MCF 10A (cell line): ENCODE measurements at regions of chr1 and their contacts with region 1.

Region 1: GRCh38 chr1:153775458-153776327 is 486 bp downstream of the SLC27A3 start:
- DNase-seq: peak; percentile 81
- H3K4me3 Mint-ChIP-seq: peak overlapping the region; percentile 70
- H3K27ac Mint-ChIP-seq: peak overlapping the region; percentile 68
- H3K4me1 Mint-ChIP-seq: peaks cover 36% of the 10 kb centered on the region
- H3K27me3 Mint-ChIP-seq: no peaks in the 10 kb centered on the region
- CTCF ChIP-seq: no peak

Region 2: GRCh38 chr1:153763365-153764225 is 12.1 kb before region 1 on chr1:
- CTCF ChIA-PET with region 1: interaction called, 4 read pairs
- POLR2A ChIA-PET with region 1: interaction called, 26 read pairs
- intact Hi-C with region 1: no loop called
- DNase-seq: no peak
- H3K4me3 Mint-ChIP-seq: no peak overlapping the region
- H3K27ac Mint-ChIP-seq: no peak overlapping the region
- H3K4me1 Mint-ChIP-seq: no peaks in the 10 kb centered on the region
- H3K27me3 Mint-ChIP-seq: no peaks in the 10 kb centered on the region
- CTCF ChIP-seq: no peak

Region 3: GRCh38 chr1:153805042-153805745 is 29.5 kb after region 1 on chr1:
- CTCF ChIA-PET with region 1: no interaction called
- POLR2A ChIA-PET with region 1: no interaction called
- intact Hi-C with region 1: no loop called
- DNase-seq: peak; percentile 95
- H3K4me3 Mint-ChIP-seq: peak overlapping the region; percentile 60
- H3K27ac Mint-ChIP-seq: peak overlapping the region; percentile 99
- H3K4me1 Mint-ChIP-seq: peaks cover 32% of the 10 kb centered on the region
- H3K27me3 Mint-ChIP-seq: no peaks in the 10 kb centered on the region
- CTCF ChIP-seq: no peak

Region 4: DNA sequence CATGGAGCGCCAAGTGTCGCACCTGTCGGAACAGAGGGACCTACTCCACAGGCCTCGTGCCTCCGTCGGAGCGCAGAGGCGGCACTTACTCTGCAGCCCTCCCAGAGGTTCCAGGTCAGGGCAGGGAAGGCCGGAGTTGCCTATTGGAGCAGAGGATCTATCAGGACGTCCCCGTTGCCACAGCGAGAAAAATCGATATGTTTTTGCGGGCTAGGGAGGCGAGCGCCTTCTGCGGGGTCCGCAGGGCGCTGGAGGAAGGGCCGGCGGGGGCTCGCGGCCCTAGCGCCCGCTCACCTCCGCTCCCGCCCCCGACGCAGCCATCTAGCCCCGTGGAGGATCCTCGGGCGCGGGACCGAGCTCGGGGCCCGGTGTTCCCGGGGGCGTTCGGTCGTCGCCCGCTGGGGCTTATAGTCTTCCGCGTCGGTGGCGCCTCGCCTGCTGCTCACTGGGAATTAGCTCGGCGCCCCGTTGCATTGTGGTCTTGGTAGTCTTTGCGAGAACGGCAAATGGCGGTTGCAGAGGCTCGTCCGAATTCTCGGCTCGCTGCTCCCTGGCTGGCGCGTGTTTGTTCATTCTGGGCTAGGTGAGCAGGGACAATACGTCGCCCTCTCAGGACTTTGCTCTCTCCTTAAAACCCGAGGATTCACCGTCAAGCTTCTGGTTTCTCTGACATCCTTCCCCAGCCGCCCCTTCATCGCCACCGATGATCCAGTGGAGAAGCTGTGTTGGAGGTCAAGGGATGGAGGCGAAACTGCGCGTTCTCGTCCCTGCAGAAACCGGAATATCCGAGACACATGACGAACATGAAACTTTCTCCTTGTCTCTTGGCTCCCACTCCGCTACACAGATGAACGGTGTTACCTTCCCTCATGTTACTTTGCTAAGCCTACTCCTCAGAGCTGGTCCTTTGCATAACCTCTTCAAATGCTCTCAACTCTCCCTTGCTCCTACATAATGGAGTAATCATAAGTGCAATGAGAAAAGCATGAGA is 201.9 kb after region 1 on chr1 and contains the start of gene JTB:
- CTCF ChIA-PET with region 1: no interaction called
- POLR2A ChIA-PET with region 1: interaction called, 14 read pairs
- intact Hi-C with region 1: no loop called
- DNase-seq: peak; percentile 93
- H3K4me3 Mint-ChIP-seq: peak within 1 kb of the TSS; percentile 98
- H3K27ac Mint-ChIP-seq: peak within 1 kb of the TSS; percentile 96
- H3K4me1 Mint-ChIP-seq: peaks cover 23% of the 10 kb centered on the region
- H3K27me3 Mint-ChIP-seq: no peaks in the 10 kb centered on the region
- CTCF ChIP-seq: no peak
- total RNA-seq, gene JTB: 194 and 224 TPM in 2 replicates

Region 5: DNA sequence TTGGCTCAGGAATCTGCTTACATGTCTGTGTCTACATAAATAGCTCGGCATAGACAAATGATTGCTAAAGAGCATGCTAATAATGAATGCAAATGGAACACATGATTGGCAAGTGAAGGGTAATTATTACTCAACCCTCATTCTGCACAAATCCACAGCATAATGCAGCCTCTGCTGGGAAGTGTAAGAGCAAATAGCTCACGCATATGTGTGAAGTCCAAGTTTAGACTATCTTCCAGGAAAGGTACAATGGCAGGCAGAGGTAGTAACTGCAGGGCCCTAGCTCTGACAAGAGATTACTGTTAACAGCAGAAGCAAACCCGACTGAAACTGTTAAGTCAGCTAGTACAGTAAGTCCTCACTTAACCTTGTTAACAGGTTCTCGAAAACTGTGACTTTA is 622.4 kb after region 1 on chr1:
- CTCF ChIA-PET with region 1: no interaction called
- POLR2A ChIA-PET with region 1: no interaction called
- intact Hi-C with region 1: no loop called
- DNase-seq: no peak
- H3K4me3 Mint-ChIP-seq: no peak overlapping the region
- H3K27ac Mint-ChIP-seq: no peak overlapping the region
- H3K4me1 Mint-ChIP-seq: no peaks in the 10 kb centered on the region
- H3K27me3 Mint-ChIP-seq: no peaks in the 10 kb centered on the region
- CTCF ChIP-seq: no peak